Cardiac septum (tissue), 1 donor: ENCODE measurements at regions of chr3 and their contacts with region 1.

Region 1: GRCh38 chr3:178084938-178085816 is 451.1 kb upstream of the KCNMB2 start:
- DNase-seq: peak; percentile 90

Region 2: GRCh38 chr3:177615015-177615414 is 470.2 kb before region 1 on chr3:
- intact Hi-C with region 1: loop called (anchors 10 kb)
- DNase-seq: peak; percentile 88

Region 3: DNA sequence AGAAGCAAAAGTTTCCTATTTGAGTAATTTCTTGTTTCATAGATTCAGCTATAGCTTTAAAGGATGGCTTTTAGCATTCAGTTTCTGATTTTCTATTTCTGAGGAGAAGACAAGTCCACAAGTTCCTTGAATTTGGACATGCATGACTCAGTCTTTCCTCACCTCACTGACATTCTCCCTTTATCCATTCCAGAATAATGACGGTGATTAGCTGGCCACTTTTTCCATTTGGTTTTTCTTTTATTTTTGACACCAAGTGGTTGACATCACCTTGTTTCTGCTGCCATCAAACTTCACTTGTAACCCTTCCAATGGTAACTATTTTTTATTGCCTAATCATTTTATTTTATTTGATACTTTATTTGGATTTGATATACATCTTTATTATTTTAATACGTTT is 46.6 kb after region 1 on chr3:
- intact Hi-C with region 1: no loop called
- DNase-seq: no peak

Region 4: GRCh38 chr3:178182337-178182779 is 97.2 kb after region 1 on chr3:
- intact Hi-C with region 1: no loop called
- DNase-seq: no peak

Region 5: GRCh38 chr3:178195824-178196223 is 110.6 kb after region 1 on chr3:
- intact Hi-C with region 1: loop called (anchors 10 kb)
- DNase-seq: no peak

Region 6: DNA sequence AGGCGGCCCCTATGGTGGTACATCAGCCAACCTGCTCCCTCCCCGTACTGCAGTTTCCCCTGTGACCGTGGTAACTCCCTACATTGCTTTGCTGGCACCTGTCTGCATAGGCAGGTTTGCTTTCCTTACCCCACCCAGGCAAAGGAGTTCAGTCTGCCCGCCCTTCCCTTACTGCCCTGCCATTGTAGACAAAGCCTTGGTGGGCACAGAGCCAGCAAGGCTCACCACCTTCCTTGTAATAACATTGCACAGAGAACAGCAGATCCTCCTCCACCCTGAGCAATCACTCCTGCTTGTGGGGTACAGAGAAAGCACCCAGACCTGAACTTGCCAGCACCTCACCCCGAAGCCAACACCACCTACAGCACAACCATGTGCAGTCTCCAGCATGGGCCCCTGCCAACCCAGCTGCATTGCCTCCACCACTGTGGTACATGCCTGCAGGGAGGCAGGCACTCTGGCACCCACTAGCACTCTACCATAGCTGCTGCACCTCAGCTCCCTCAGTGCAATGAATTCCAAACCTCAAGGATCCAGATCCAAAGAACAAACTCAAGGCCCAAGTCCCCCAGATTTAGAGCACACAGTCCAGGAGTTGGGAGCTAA is 258.4 kb after region 1 on chr3:
- intact Hi-C with region 1: no loop called
- DNase-seq: no peak